ENCODE measurements at regions of chr15 and their contacts with region 1.

Region 1: GRCh38 chr15:71691458-71692417 is 118.6 kb upstream of the NR2E3 start:
- DNase-seq: peak; percentile 69
- H3K4me3 ChIP-seq: 0 out of 2 replicates have a peak overlapping the region, but pooled peaks have one; percentile 8
- H3K27me3 ChIP-seq: no peaks in the 10 kb centered on the region
- CTCF ChIP-seq: no peak

Region 2: GRCh38 chr15:70264014-70264582 is 1427.6 kb before region 1 on chr15:
- CTCF ChIA-PET with region 1: no interaction called
- POLR2A ChIA-PET with region 1: interaction called, 10 read pairs
- DNase-seq: no peak
- H3K4me3 ChIP-seq: no peak overlapping the region
- H3K27me3 ChIP-seq: peaks cover 2% of the 10 kb centered on the region
- CTCF ChIP-seq: no peak